ENCODE measurements at regions of chr11 and their contacts with region 1.

Region 1: GRCh38 chr11:59171508-59172322 is at the start of gene DTX4:
- DNase-seq: peak; percentile 94
- H3K4me3 Mint-ChIP-seq: peak within 1 kb of the TSS; percentile 68
- H3K27ac Mint-ChIP-seq: no peak within 1 kb of the TSS
- H3K4me1 Mint-ChIP-seq: peaks cover 13% of the 10 kb centered on the region
- H3K27me3 Mint-ChIP-seq: peaks cover 15% of the 10 kb centered on the region
- total RNA-seq, gene DTX4: 0.07 to 0.14 TPM

Region 2: DNA sequence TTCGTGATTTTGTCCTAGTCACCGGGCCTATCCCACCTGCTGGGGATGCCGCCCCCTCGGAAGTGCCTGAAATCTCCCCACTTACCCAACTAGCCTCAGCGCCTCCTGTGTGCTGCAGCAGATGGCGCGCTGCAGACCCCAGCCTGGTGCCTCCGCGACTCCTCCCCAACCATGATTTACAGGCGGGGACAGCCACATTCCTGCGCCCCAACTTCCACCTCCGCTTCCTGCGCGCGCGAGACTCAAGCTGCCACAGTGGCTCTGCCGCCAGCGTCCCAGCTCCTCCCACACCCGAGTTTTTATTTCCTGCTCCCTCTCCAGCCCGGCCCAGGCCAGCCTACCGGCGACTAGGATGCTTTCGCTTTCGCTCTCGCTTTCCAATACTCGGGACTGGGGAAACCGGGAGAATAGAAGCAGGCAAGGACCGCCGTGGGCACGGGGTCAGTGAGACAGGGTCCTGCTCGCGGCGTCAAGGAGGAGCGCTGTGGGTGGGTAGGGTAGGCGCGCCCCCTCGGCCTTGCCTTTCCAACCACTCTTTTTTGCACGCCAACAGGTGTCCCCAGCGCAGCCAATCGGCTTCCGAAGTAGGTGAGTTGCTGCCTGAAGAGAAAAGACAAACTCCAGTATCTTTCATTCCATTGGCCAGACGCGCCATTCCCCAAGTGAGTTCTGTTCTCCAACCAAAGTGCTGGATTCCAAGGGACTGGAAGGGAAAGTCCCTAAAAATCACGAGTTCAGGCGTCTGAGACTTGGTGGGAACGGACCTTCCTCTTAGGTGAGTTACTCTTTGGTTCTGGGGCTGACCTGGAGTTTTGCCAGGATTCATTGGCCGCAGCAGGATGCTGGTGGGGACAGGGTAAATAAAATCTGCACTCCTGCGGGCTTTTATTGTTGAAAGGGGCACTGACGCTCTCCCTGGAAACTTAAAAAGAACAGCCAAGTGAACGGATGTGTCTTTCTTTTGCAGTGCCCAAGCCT is 28.9 kb before region 1 on chr11 and contains the start of gene FAM111A:
- CTCF ChIA-PET with region 1: interaction called, 8 read pairs
- intact Hi-C with region 1: loop called (anchors 1 kb)
- DNase-seq: peak; percentile 88
- H3K4me3 Mint-ChIP-seq: peak within 1 kb of the TSS; percentile 95
- H3K27ac Mint-ChIP-seq: peak within 1 kb of the TSS; percentile 91
- H3K4me1 Mint-ChIP-seq: peaks cover 40% of the 10 kb centered on the region
- H3K27me3 Mint-ChIP-seq: no peaks in the 10 kb centered on the region
- total RNA-seq, gene FAM111A: 98.3 to 99.4 TPM

Region 3: GRCh38 chr11:59197991-59198390 is 26.3 kb after region 1 on chr11:
- CTCF ChIA-PET with region 1: interaction called, 67 read pairs
- intact Hi-C with region 1: loop called (anchors 1 kb)
- DNase-seq: no peak
- H3K4me3 Mint-ChIP-seq: no peak overlapping the region
- H3K27ac Mint-ChIP-seq: no peak overlapping the region
- H3K4me1 Mint-ChIP-seq: peaks cover 15% of the 10 kb centered on the region
- H3K27me3 Mint-ChIP-seq: peaks cover 17% of the 10 kb centered on the region

Region 4: GRCh38 chr11:59283825-59284772 is 112.4 kb after region 1 on chr11:
- CTCF ChIA-PET with region 1: interaction called, 13 read pairs
- intact Hi-C with region 1: loop called (anchors 1 kb)
- DNase-seq: peak; percentile 62
- H3K4me3 Mint-ChIP-seq: peak overlapping the region; percentile 26
- H3K27ac Mint-ChIP-seq: no peak overlapping the region
- H3K4me1 Mint-ChIP-seq: peaks cover 15% of the 10 kb centered on the region
- H3K27me3 Mint-ChIP-seq: peaks cover 8% of the 10 kb centered on the region

Region 5: DNA sequence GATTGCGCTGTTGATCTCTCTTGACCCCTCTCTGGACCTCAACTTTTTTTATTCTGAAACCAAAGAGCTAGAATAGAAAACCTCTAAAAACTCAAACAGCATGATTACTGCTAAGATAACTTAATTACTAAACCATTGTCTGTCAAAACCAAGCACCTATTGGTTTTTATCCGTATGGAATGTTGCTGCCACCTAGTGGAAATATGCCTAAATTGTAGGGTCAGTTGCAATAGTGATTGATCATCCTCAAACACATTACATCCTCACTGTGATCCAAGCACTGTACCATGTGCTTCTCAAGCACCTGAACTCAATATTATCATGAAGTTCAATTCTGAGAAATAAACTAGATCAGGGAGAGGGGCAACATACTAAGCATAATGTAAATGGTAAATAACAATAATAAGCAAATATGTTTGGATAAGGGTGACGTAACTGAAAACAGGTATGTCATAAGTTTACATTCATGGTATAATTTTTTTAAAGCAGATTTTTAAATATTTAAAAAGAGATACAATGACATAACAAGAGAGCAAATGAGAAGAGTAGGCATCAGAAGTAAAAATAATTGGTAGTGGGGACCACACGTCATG is 258.3 kb after region 1 on chr11:
- CTCF ChIA-PET with region 1: interaction called, 24 read pairs
- intact Hi-C with region 1: loop called (anchors 1 kb)
- DNase-seq: peak; percentile 59
- H3K4me3 Mint-ChIP-seq: no peak overlapping the region
- H3K27ac Mint-ChIP-seq: no peak overlapping the region
- H3K4me1 Mint-ChIP-seq: no peaks in the 10 kb centered on the region
- H3K27me3 Mint-ChIP-seq: peaks cover 2% of the 10 kb centered on the region

Region 6: DNA sequence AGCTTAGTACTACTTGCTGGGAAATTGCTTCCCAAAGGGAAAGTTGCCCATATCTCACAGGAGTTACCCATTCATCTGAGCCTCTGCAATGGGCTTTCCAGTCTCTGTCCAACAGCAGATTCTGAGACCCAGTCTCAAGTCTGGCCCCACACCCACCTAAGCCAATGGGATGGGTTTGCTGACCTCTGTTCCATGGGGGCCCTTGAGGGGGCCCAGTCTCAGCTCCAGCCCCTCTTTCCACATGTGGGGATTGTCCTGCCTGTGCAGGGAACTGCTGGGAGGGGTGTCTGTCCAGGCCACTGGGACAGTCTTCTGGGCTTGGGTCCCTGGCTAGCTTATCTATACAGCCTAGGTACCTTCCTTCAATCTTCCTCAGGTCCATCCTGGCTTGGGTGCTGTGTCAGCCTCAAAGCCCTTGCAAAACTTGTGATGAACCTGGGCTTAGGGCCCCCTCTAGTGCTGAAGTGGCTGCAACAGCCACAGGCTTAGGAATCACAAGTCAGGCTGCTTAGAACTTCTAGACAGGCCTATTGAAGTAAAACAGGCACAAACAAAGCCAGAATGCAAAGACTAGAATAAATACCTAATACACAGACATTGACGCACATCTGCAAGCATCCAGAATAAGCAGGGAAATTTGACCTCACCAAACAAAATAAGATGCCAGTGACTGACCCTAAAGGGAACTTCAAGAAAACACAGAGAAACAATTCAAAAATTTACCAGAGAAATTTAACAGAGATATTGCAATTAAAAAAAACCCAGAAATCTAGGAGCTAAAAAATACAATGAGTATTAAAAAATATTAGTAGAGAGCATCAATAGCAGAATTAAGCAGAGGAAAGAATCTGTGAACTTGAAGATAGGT is 508.8 kb after region 1 on chr11:
- CTCF ChIA-PET with region 1: no interaction called
- intact Hi-C with region 1: loop called (anchors 1 kb)
- DNase-seq: peak; percentile 70
- H3K4me3 Mint-ChIP-seq: no peak overlapping the region
- H3K27ac Mint-ChIP-seq: no peak overlapping the region
- H3K4me1 Mint-ChIP-seq: no peaks in the 10 kb centered on the region
- H3K27me3 Mint-ChIP-seq: peaks cover 6% of the 10 kb centered on the region

Region 7: DNA sequence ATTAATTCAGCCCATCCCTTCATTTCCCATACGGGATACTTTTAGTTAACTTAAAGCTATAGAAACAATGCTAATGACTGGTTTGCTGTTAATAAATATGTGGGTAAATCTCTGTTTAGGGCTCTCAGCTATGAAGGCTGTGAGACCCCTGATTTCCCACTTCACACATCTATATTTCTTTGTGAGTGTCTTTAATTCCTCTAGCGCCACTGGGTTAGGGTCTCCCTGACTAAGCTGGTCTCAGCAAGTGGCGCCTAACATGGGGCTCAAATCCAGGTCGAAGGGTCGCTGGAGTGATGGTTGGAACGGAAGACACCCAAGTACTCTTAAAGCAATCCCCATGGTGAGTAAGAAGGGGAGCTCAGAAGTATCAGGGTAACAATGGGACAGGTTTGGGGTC is 752.1 kb after region 1 on chr11:
- CTCF ChIA-PET with region 1: no interaction called
- intact Hi-C with region 1: no loop called
- DNase-seq: no peak
- H3K4me3 Mint-ChIP-seq: no peak overlapping the region
- H3K27ac Mint-ChIP-seq: no peak overlapping the region
- H3K4me1 Mint-ChIP-seq: no peaks in the 10 kb centered on the region
- H3K27me3 Mint-ChIP-seq: peaks cover 2% of the 10 kb centered on the region